ENCODE measurements at regions of chr18 and their contacts with region 1.

Region 1: GRCh38 chr18:55234366-55235093 is 275.3 kb upstream of the CCDC68 start:
- H3K4me3 ChIP-seq: no peak overlapping the region
- H3K27ac ChIP-seq: no peak overlapping the region
- H3K4me1 ChIP-seq: peaks cover 3% of the 10 kb centered on the region
- CTCF ChIP-seq: peak; percentile 82; the same call in 1 of the 2 replicates

Region 2: GRCh38 chr18:55001394-55002024 is 233.0 kb before region 1 on chr18:
- CTCF ChIA-PET with region 1: no interaction called
- POLR2A ChIA-PET with region 1: no interaction called
- H3K4me3 ChIP-seq: no peak overlapping the region
- H3K27ac ChIP-seq: no peak overlapping the region
- H3K4me1 ChIP-seq: no peaks in the 10 kb centered on the region
- CTCF ChIP-seq: no peak

Region 3: DNA sequence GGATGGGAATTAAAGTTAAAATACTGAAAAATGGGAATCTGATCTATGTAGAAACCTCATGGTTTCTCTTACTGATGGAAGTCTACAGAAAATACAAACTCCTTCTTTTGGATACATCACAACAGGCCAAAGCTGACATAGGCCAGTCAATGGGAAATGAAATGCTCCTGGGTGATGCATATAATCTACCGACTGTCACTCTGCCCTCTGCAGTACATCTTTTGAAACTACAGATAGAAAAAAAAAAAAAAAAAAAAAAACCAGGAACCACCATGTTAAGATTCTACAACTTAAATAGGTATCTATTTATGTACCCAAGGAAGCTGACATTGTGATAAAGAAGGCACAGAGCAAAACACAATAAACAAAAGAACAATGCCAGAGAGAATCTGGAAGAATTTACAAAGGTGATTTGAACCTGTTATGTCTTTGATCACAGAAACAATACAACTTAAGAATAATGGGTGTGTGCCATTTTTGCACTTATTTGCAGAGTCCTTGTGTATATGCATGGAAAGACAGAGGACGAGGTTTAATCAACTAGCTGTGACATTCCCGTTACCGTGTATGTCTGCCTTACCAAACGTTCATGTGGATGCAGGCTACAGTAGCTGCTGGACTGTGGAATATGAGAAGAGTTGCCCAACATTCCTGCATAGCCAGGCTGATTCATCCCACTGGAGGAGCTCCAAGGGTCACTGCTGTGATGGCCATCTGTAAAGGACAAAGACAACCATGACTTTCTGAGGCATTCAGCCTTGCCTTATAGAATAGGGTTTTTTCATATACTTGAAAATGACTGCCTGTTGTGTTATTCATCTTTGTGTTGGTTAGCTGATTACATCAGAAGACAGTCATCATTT is 40.7 kb after region 1 on chr18:
- CTCF ChIA-PET with region 1: interaction called, 19 read pairs
- POLR2A ChIA-PET with region 1: no interaction called
- H3K4me3 ChIP-seq: no peak overlapping the region
- H3K27ac ChIP-seq: no peak overlapping the region
- H3K4me1 ChIP-seq: peaks cover 2% of the 10 kb centered on the region; the same call in 1 of the 2 replicates
- CTCF ChIP-seq: no peak

Region 4: DNA sequence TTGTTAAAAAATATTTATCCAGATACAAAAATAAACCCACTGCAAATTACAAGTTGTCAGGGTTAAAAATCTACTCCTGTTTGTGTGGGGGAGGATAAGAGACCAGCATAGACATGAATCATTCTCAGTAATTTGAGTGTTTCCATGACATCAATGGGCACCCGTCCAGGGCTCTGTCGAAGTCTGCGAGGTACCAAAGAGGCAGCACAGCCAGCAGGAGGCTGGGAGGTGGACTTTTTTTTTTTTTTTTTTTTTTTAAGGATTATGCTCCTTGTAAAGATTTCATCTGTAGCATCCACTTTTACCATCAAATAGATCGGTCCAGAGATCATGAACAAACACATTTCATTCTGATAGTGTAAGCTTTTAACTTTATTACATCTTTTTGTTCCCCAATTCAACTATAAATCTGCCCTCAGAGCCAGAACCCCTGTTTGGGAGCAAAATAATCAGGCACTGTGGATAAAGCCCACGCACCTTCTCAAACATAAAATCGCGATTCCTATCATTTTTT is 171.4 kb after region 1 on chr18:
- CTCF ChIA-PET with region 1: interaction called, 11 read pairs
- POLR2A ChIA-PET with region 1: no interaction called
- H3K4me3 ChIP-seq: no peak overlapping the region
- H3K27ac ChIP-seq: peak overlapping the region; percentile 87
- H3K4me1 ChIP-seq: peaks cover 38% of the 10 kb centered on the region
- CTCF ChIP-seq: no peak

Region 5: GRCh38 chr18:55781481-55781957 is 547.0 kb after region 1 on chr18:
- CTCF ChIA-PET with region 1: interaction called, 27 read pairs
- POLR2A ChIA-PET with region 1: no interaction called
- H3K4me3 ChIP-seq: no peak overlapping the region
- H3K27ac ChIP-seq: no peak overlapping the region
- H3K4me1 ChIP-seq: peaks cover 6% of the 10 kb centered on the region; the same call in 1 of the 2 replicates
- CTCF ChIP-seq: peak; percentile 72; the same call in 1 of the 2 replicates